K562 (cell line): ENCODE measurements at regions of chr7 and their contacts with region 1.

Region 1: GRCh38 chr7:135801045-135801693 is 52.6 kb upstream of the FAM180A start:
- DNase-seq: peak; percentile 74 to 83 (median 78)
- ATAC-seq: peak; percentile 84
- H3K4me3 ChIP-seq: no peak overlapping the region
- H3K27ac ChIP-seq: no peak overlapping the region
- H3K4me1 ChIP-seq: peaks cover 6 to 10% of the 10 kb centered on the region in 2 experiments; a peak in 3 of 5 replicates
- H3K27me3 ChIP-seq: peaks cover 13 to 27% of the 10 kb centered on the region in 2 experiments; a peak in 4 of 5 replicates
- CTCF ChIP-seq: peak; percentile 87 to 98 (median 96)
- EP300 ChIP-seq: no peak
- POLR2A ChIP-seq: no peak
- RAD21 ChIP-seq: peak; percentile 100

Region 2: GRCh38 chr7:135281363-135281949 is 519.7 kb before region 1 on chr7:
- CTCF ChIA-PET with region 1: interaction called, 5 read pairs
- POLR2A ChIA-PET with region 1: no interaction called
- in situ Hi-C with region 1: loop called (anchors 5 kb)
- intact Hi-C with region 1: loop called (anchors 2 kb)
- DNase-seq: peak; percentile 88 to 93 (median 91)
- ATAC-seq: peak; percentile 99
- H3K4me3 ChIP-seq: no peak overlapping the region
- H3K27ac ChIP-seq: no peak overlapping the region
- H3K4me1 ChIP-seq: peaks cover 0 to 4% of the 10 kb centered on the region in 2 experiments; a peak in 1 of 5 replicates
- H3K27me3 ChIP-seq: peaks cover 12 to 17% of the 10 kb centered on the region in 2 experiments
- CTCF ChIP-seq: peak; percentile 100
- EP300 ChIP-seq: peak; percentile 38
- POLR2A ChIP-seq: no peak
- RAD21 ChIP-seq: peak; percentile 100

Region 3: GRCh38 chr7:135855846-135856245 is 54.7 kb after region 1 on chr7:
- CTCF ChIA-PET with region 1: no interaction called
- POLR2A ChIA-PET with region 1: no interaction called
- in situ Hi-C with region 1: no loop called
- intact Hi-C with region 1: no loop called
- DNase-seq: peak in 1 of 4 experiments; percentile 30
- ATAC-seq: peak; percentile 59
- H3K4me3 ChIP-seq: no peak overlapping the region
- H3K27ac ChIP-seq: no peak overlapping the region
- H3K4me1 ChIP-seq: peaks cover 0 to 4% of the 10 kb centered on the region in 2 experiments; a peak in 1 of 5 replicates
- H3K27me3 ChIP-seq: peaks cover 2 to 14% of the 10 kb centered on the region in 2 experiments; a peak in 3 of 5 replicates
- CTCF ChIP-seq: no peak
- EP300 ChIP-seq: no peak; the same call in 1 of the 2 replicates
- POLR2A ChIP-seq: no peak
- RAD21 ChIP-seq: no peak

Region 4: GRCh38 chr7:135930565-135931461 is 129.6 kb after region 1 on chr7:
- CTCF ChIA-PET with region 1: no interaction called
- POLR2A ChIA-PET with region 1: no interaction called
- in situ Hi-C with region 1: no loop called
- intact Hi-C with region 1: loop called (anchors 5 kb)
- DNase-seq: no peak
- ATAC-seq: peak; percentile 3; the same call in 1 of the 3 replicates
- H3K4me3 ChIP-seq: no peak overlapping the region
- H3K27ac ChIP-seq: no peak overlapping the region
- H3K4me1 ChIP-seq: peaks cover 21 to 53% of the 10 kb centered on the region in 2 experiments
- H3K27me3 ChIP-seq: no peaks in the 10 kb centered on the region
- CTCF ChIP-seq: no peak
- EP300 ChIP-seq: no peak
- POLR2A ChIP-seq: 0 out of 2 replicates have a peak, but pooled peaks have one; percentile 37
- RAD21 ChIP-seq: no peak

Region 5: GRCh38 chr7:136114966-136115762 is 314.0 kb after region 1 on chr7:
- CTCF ChIA-PET with region 1: no interaction called
- POLR2A ChIA-PET with region 1: no interaction called
- in situ Hi-C with region 1: no loop called
- intact Hi-C with region 1: loop called (anchors 5 kb)
- DNase-seq: peak; percentile 77 to 90 (median 82)
- ATAC-seq: peak; percentile 99
- H3K4me3 ChIP-seq: no peak overlapping the region
- H3K27ac ChIP-seq: no peak overlapping the region
- H3K4me1 ChIP-seq: peaks cover 0 to 25% of the 10 kb centered on the region in 2 experiments; a peak in 3 of 5 replicates
- H3K27me3 ChIP-seq: no peaks in the 10 kb centered on the region
- CTCF ChIP-seq: peak; percentile 89 to 95 (median 93)
- EP300 ChIP-seq: peak; percentile 47
- POLR2A ChIP-seq: no peak
- RAD21 ChIP-seq: peak; percentile 71 to 83

Region 6: GRCh38 chr7:136405931-136406777 is 605.0 kb after region 1 on chr7:
- CTCF ChIA-PET with region 1: no interaction called
- POLR2A ChIA-PET with region 1: no interaction called
- in situ Hi-C with region 1: no loop called
- intact Hi-C with region 1: loop called (anchors 5 kb)
- DNase-seq: peak; percentile 58 to 77 (median 64)
- ATAC-seq: peak; percentile 96
- H3K4me3 ChIP-seq: no peak overlapping the region
- H3K27ac ChIP-seq: no peak overlapping the region
- H3K4me1 ChIP-seq: no peaks in the 10 kb centered on the region
- H3K27me3 ChIP-seq: no peaks in the 10 kb centered on the region
- CTCF ChIP-seq: peak; percentile 74 to 84 (median 74)
- EP300 ChIP-seq: no peak
- POLR2A ChIP-seq: no peak
- RAD21 ChIP-seq: peak; percentile 36 to 75

Region 7: DNA sequence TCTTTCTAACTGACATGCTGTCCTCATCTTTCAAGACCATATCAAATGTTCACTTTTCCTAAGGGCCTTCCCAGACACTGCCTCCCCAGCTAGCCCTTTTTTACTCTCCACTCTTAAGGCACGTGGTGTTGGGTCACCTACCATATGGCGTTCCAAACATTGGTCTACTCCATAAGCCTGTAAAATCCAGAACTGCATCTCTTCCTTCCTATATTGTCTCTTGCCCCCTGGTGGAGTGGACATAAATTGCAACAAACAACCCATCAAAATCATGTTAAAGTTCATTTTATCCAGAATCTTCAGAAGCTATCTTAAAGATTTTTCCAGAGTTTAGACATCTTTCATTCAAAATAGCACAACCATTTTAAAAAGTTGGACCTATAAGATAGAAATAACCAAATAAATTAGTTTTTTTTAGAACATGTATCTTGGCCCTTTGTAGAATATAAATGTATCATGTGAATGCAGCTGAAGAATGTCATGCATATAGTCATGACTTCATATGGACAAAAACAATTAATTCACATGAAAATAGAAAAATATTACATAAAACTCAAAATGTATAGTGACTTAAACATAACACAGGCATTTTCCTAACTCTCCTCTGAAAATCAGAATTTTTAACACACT is 886.6 kb after region 1 on chr7:
- CTCF ChIA-PET with region 1: no interaction called
- POLR2A ChIA-PET with region 1: no interaction called
- in situ Hi-C with region 1: no loop called
- intact Hi-C with region 1: loop called (anchors 1 kb)
- DNase-seq: peak; percentile 24 to 53 (median 50)
- ATAC-seq: peak; percentile 67
- H3K4me3 ChIP-seq: no peak overlapping the region
- H3K27ac ChIP-seq: no peak overlapping the region
- H3K4me1 ChIP-seq: no peaks in the 10 kb centered on the region
- H3K27me3 ChIP-seq: no peaks in the 10 kb centered on the region
- CTCF ChIP-seq: peak; percentile 46 to 75 (median 60); a peak in 5 of 6 replicates
- EP300 ChIP-seq: no peak
- POLR2A ChIP-seq: no peak
- RAD21 ChIP-seq: peak; percentile 51 to 62

Region 8: DNA sequence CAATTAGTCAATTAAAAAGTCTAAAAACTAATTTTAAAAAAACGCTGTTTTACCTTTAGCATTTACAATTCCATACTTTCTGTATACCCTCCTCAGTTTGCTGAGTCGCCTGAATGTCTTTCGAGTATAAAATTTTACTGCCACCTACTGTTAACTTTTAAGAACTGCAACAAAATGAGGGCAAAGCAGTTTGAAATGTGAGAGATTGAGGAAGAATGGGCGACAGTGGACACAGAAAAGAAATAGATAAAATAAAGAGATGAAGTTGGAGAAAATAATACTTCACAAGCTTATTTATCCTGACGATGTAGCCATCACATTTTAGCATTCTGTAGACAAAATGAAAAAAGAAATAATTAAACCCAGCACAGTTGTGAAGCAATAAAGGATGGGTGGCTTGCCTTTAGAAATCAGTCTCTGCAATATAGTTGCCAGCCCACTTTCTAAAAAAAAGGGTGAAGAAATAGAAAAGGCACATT is 1653.1 kb after region 1 on chr7:
- CTCF ChIA-PET with region 1: no interaction called
- POLR2A ChIA-PET with region 1: no interaction called
- in situ Hi-C with region 1: loop called (anchors 25 kb)
- intact Hi-C with region 1: loop called (anchors 1 kb)
- DNase-seq: peak; percentile 32 to 60 (median 54)
- ATAC-seq: peak; percentile 85
- H3K4me3 ChIP-seq: no peak overlapping the region
- H3K27ac ChIP-seq: no peak overlapping the region
- H3K4me1 ChIP-seq: no peaks in the 10 kb centered on the region
- H3K27me3 ChIP-seq: no peaks in the 10 kb centered on the region
- CTCF ChIP-seq: peak; percentile 53 to 76 (median 61); a peak in 5 of 6 replicates
- EP300 ChIP-seq: no peak
- POLR2A ChIP-seq: no peak
- RAD21 ChIP-seq: peak; percentile 78 to 82